ENCODE measurements at regions of chr12 and their contacts with region 1.

Region 1: GRCh38 chr12:5003020-5003666 is 40.5 kb upstream of the KCNA5 start:
- DNase-seq: peak; percentile 52
- ATAC-seq: peak; percentile 80
- H3K4me3 ChIP-seq: no peak overlapping the region
- H3K27ac ChIP-seq: no peak overlapping the region
- H3K4me1 ChIP-seq: no peaks in the 10 kb centered on the region
- H3K27me3 ChIP-seq: no peaks in the 10 kb centered on the region
- CTCF ChIP-seq: peak; percentile 78

Region 2: DNA sequence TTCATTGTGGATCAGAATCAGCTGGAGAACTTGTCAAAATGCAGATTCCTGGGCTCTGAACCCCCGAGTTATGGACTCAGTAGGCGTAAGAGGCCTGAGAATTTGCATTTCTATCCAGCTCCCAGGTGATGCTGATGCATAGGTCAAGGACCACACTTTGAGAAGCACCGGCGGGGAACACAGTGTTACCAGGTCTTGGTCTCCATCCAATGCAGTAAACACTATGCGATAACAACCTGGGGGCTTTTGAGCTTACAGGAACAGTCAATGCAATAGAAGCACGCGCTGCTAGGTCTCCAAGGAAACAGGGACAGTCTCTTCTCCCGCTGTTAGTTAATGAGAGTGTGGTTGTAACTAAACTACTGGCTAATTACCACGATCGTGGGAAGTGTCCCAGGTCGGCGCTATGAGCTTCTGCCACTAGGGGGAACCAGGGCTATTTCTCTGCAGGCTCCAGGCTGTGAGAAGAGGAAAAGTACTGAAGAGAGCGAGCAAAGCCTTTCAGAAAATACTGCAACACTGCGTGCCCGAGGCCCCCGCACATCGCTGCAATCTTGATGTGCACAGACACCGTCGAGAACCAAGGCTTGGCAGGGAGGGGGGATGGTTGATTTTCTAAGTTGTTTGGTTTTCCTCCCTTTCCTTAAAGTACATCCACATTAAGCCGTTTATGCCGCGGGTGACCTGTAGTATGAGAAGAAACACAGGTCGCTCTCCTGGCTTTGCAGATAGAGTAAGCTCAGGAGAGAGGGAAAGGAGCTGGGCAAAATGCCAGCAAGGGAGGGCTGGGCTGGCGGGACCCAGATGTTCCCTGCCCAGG is 145.5 kb before region 1 on chr12:
- CTCF ChIA-PET with region 1: no interaction called
- POLR2A ChIA-PET with region 1: no interaction called
- intact Hi-C with region 1: loop called (anchors 2 kb)
- DNase-seq: peak; percentile 68
- ATAC-seq: peak; percentile 85
- H3K4me3 ChIP-seq: 0 out of 2 replicates have a peak overlapping the region, but pooled peaks have one; percentile 25
- H3K27ac ChIP-seq: no peak overlapping the region
- H3K4me1 ChIP-seq: no peaks in the 10 kb centered on the region
- H3K27me3 ChIP-seq: peaks cover 22% of the 10 kb centered on the region
- CTCF ChIP-seq: peak; percentile 78

Measured in PC-3 (cell line).